ENCODE measurements at regions of chr4 and their contacts with region 1.

Region 1: DNA sequence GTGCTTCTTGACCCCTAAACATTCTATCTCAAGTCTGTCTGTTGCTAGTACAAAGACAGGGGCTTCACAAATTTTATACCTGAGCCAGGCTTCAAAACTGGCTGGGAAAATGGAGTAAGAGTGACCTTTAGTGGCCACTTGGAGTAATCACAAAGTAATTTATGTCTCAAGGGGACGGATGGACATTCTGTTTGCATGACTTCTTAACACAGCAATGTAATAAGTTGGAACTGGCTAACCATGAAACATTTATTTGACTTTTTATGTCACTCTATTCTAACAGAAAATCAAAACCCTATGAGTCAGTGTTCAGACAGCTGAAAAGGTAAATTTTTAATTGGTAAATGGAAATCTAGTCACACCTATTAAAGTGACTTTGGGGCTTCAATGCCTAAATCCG is 600.6 kb downstream of the ANKRD50 start:
- DNase-seq: peak in 1 of 2 donors; percentile 16
- ATAC-seq: peak; percentile 91 to 97
- H3K4me3 ChIP-seq: no peak overlapping the region
- H3K27ac ChIP-seq: peak overlapping the region in 2 of 4 donors; percentile 17 to 39
- H3K4me1 ChIP-seq: peaks cover 4 to 11% of the 10 kb centered on the region in 2 donors
- H3K27me3 ChIP-seq: no peaks in the 10 kb centered on the region
- CTCF ChIP-seq: peak; percentile 57 to 73 (median 66)
- POLR2A ChIP-seq: no peak

Region 2: GRCh38 chr4:123102897-123103471 is 1008.9 kb before region 1 on chr4:
- in situ Hi-C with region 1: loop called in 2 of 4 experiments (anchors 25 kb)
- intact Hi-C with region 1: loop called (anchors 5 kb)
- DNase-seq: no peak
- ATAC-seq: peak in 1 of 2 donors; percentile 78
- H3K4me3 ChIP-seq: no peak overlapping the region
- H3K27ac ChIP-seq: no peak overlapping the region
- H3K4me1 ChIP-seq: peaks cover 0 to 3% of the 10 kb centered on the region in 2 donors
- H3K27me3 ChIP-seq: no peaks in the 10 kb centered on the region
- CTCF ChIP-seq: peak; percentile 47 to 75 (median 67)
- POLR2A ChIP-seq: no peak

Region 3: GRCh38 chr4:123340381-123340701 is 771.6 kb before region 1 on chr4:
- in situ Hi-C with region 1: no loop called
- intact Hi-C with region 1: loop called (anchors 10 kb)
- DNase-seq: no peak
- ATAC-seq: peak; percentile 77 to 83
- H3K4me3 ChIP-seq: no peak overlapping the region
- H3K27ac ChIP-seq: peak overlapping the region; percentile 57 to 73 (median 68)
- H3K4me1 ChIP-seq: peaks cover 4 to 9% of the 10 kb centered on the region in 2 donors
- H3K27me3 ChIP-seq: no peaks in the 10 kb centered on the region
- CTCF ChIP-seq: no peak
- POLR2A ChIP-seq: peak; percentile 21 to 39

Region 4: GRCh38 chr4:123555233-123555806 is 556.6 kb before region 1 on chr4:
- in situ Hi-C with region 1: loop called (anchors 25 kb)
- intact Hi-C with region 1: loop called (anchors 2 kb)
- DNase-seq: peak; percentile 68
- ATAC-seq: peak; percentile 84 to 86
- H3K4me3 ChIP-seq: peak overlapping the region in 2 of 4 donors; percentile 4 to 37
- H3K27ac ChIP-seq: peak overlapping the region; percentile 38 to 74 (median 54)
- H3K4me1 ChIP-seq: peaks cover 15 to 17% of the 10 kb centered on the region in 2 donors
- H3K27me3 ChIP-seq: no peaks in the 10 kb centered on the region
- CTCF ChIP-seq: no peak
- POLR2A ChIP-seq: no peak

Region 5: DNA sequence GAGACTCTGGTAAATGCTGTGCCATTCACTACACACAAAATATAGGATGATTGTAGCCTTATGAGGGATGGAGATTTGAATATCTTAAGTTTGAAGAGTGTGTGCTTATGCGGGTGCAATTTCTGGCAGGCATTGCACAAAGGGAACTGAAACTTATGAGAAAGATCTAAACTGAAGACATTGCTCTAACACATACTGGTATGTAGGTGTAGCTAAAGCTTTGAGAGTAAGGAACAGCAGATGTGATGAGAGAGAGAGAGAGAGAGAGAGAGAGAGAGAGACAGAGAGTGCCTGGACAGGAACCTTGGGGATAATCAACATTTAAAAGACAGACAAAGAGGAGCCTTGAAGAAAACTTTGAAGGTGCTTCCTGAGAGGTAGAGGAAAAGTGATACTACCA is 335.7 kb before region 1 on chr4:
- in situ Hi-C with region 1: loop called in 2 of 4 experiments (anchors 10 kb)
- intact Hi-C with region 1: loop called (anchors 2 kb)
- DNase-seq: no peak
- ATAC-seq: no peak
- H3K4me3 ChIP-seq: no peak overlapping the region
- H3K27ac ChIP-seq: peak overlapping the region in 3 of 4 donors; percentile 35 to 56 (median 37)
- H3K4me1 ChIP-seq: peaks cover 4 to 6% of the 10 kb centered on the region in 2 donors
- H3K27me3 ChIP-seq: no peaks in the 10 kb centered on the region
- CTCF ChIP-seq: no peak
- POLR2A ChIP-seq: no peak

Region 6: GRCh38 chr4:124060261-124060918 is 51.5 kb before region 1 on chr4:
- in situ Hi-C with region 1: no loop called
- intact Hi-C with region 1: no loop called
- DNase-seq: peak; percentile 48 to 59
- ATAC-seq: peak; percentile 93
- H3K4me3 ChIP-seq: peak overlapping the region in 1 of 4 donors; percentile 3
- H3K27ac ChIP-seq: peak overlapping the region; percentile 64 to 78 (median 71)
- H3K4me1 ChIP-seq: peaks cover 3 to 19% of the 10 kb centered on the region in 2 donors
- H3K27me3 ChIP-seq: no peaks in the 10 kb centered on the region
- CTCF ChIP-seq: no peak
- POLR2A ChIP-seq: no peak